Activated naive CD4-positive, alpha-beta T cell treated with anti-CD3 and anti-CD28 coated beads for 36 hours (primary cell): ENCODE measurements at regions of chr1 and their contacts with region 1.

Region 1: GRCh38 chr1:193569096-193569982 is 382.9 kb upstream of the B3GALT2 start:
- DNase-seq: peak; percentile 11
- H3K4me3 Mint-ChIP-seq: no peak overlapping the region
- H3K27ac Mint-ChIP-seq: peak overlapping the region; percentile 22
- H3K4me1 Mint-ChIP-seq: peaks cover 26% of the 10 kb centered on the region
- H3K27me3 Mint-ChIP-seq: no peaks in the 10 kb centered on the region

Region 2: GRCh38 chr1:193558491-193559028 is 10.8 kb before region 1 on chr1:
- CTCF ChIA-PET with region 1: no interaction called
- intact Hi-C with region 1: loop called (anchors 1 kb)
- DNase-seq: peak; percentile 6
- H3K4me3 Mint-ChIP-seq: no peak overlapping the region
- H3K27ac Mint-ChIP-seq: no peak overlapping the region
- H3K4me1 Mint-ChIP-seq: peaks cover 13% of the 10 kb centered on the region
- H3K27me3 Mint-ChIP-seq: no peaks in the 10 kb centered on the region

Region 3: GRCh38 chr1:193589597-193590040 is 20.3 kb after region 1 on chr1:
- CTCF ChIA-PET with region 1: no interaction called
- intact Hi-C with region 1: no loop called
- DNase-seq: no peak
- H3K4me3 Mint-ChIP-seq: no peak overlapping the region
- H3K27ac Mint-ChIP-seq: no peak overlapping the region
- H3K4me1 Mint-ChIP-seq: peaks cover 6% of the 10 kb centered on the region
- H3K27me3 Mint-ChIP-seq: no peaks in the 10 kb centered on the region

Region 4: GRCh38 chr1:194289569-194290266 is 720.4 kb after region 1 on chr1:
- CTCF ChIA-PET with region 1: no interaction called
- intact Hi-C with region 1: loop called (anchors 1 kb)
- DNase-seq: peak; percentile 81
- H3K4me3 Mint-ChIP-seq: peak overlapping the region; percentile 54
- H3K27ac Mint-ChIP-seq: peak overlapping the region; percentile 59
- H3K4me1 Mint-ChIP-seq: peaks cover 25% of the 10 kb centered on the region
- H3K27me3 Mint-ChIP-seq: no peaks in the 10 kb centered on the region